Naive thymus-derived CD4-positive, alpha-beta T cell (primary cell): ENCODE measurements at regions of chr11 and their contacts with region 1.

Region 1: DNA sequence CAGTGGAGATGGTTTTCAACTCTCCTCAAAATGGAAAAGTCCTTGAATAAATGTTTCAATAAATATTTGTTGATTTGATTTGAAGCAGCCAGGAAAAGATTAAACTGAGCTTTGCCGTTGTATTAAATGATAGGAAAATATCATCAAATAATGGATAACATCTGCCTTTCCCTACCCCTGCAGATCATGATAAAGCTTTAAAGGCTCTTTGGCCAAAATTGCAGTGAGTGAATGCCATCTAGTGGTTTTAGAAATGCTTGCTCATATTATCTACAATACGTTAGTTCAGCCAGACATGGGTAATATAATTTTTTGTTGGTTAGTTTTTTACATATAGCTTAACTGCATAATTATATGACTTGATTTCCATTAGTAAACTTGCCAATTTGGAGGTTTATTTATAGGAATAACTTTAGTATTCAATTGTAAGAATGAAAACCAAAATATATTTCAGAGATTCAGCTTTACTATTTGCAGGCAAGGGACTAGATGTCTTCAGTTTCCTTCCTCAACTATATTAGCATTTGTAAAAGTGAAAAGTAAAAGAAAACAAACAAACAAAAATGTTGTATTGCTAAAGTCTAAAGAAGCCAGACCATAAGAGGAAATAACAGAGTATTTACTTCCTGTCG is 159.2 kb downstream of the MSANTD4 start:
- DNase-seq: peak in 5 of 9 donors; percentile 3 to 25 (median 12)
- ATAC-seq: no peak
- H3K4me3 ChIP-seq: no peak overlapping the region
- H3K4me3 Mint-ChIP-seq: no peak overlapping the region
- H3K27ac ChIP-seq: no peak overlapping the region
- H3K27ac Mint-ChIP-seq: no peak overlapping the region
- H3K4me1 ChIP-seq: no peaks in the 10 kb centered on the region
- H3K4me1 Mint-ChIP-seq: no peaks in the 10 kb centered on the region
- H3K27me3 ChIP-seq: no peaks in the 10 kb centered on the region
- H3K27me3 Mint-ChIP-seq: peaks cover 0 to 16% (median 13%) of the 10 kb centered on the region in 5 donors

Region 2: GRCh38 chr11:104254347-104254746 is 1608.5 kb before region 1 on chr11:
- CTCF ChIA-PET with region 1: no interaction called
- POLR2A ChIA-PET with region 1: no interaction called
- intact Hi-C with region 1: loop called in 1 of 2 experiments (anchors 10 kb)
- DNase-seq: peak in 1 of 9 donors; percentile 22
- ATAC-seq: no peak
- H3K4me3 ChIP-seq: no peak overlapping the region
- H3K4me3 Mint-ChIP-seq: no peak overlapping the region
- H3K27ac ChIP-seq: no peak overlapping the region
- H3K27ac Mint-ChIP-seq: no peak overlapping the region
- H3K4me1 ChIP-seq: no peaks in the 10 kb centered on the region
- H3K4me1 Mint-ChIP-seq: no peaks in the 10 kb centered on the region
- H3K27me3 ChIP-seq: no peaks in the 10 kb centered on the region
- H3K27me3 Mint-ChIP-seq: no peaks in the 10 kb centered on the region

Region 3: DNA sequence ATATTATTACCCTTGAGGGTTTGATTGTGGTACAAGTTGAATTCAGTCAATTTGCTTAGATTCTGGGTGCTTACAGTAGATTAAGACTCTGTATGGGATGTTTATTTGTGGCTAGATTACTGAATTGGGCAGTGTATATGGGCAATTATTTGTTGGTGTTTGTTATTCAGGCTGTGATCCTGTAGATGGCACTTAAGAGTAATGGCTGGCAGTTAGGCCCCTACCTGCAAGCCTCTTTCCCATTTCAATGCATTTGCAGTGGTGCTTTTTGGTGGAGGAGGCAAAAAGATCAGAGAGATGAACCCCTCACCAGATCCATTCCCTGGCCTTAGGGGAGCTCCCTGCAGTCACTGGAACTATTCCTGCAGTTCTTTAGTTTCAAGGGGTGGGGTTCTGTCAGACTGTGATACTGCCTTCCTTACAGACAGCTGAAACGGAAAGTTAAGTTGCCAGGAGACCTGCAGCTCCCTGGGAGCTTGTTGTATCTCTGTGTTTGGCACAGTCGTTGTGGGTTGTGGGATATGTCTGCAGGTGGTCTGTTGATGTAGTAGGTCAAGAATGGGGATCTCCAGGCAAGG is 414.1 kb after region 1 on chr11:
- CTCF ChIA-PET with region 1: no interaction called
- POLR2A ChIA-PET with region 1: no interaction called
- intact Hi-C with region 1: no loop called
- DNase-seq: no peak
- ATAC-seq: no peak
- H3K4me3 ChIP-seq: no peak overlapping the region
- H3K4me3 Mint-ChIP-seq: no peak overlapping the region
- H3K27ac ChIP-seq: no peak overlapping the region
- H3K27ac Mint-ChIP-seq: no peak overlapping the region
- H3K4me1 ChIP-seq: no peaks in the 10 kb centered on the region
- H3K4me1 Mint-ChIP-seq: no peaks in the 10 kb centered on the region
- H3K27me3 ChIP-seq: no peaks in the 10 kb centered on the region
- H3K27me3 Mint-ChIP-seq: peaks cover 0 to 16% (median 4%) of the 10 kb centered on the region in 5 donors